ENCODE measurements at regions of chr2 and their contacts with region 1.

Region 1: DNA sequence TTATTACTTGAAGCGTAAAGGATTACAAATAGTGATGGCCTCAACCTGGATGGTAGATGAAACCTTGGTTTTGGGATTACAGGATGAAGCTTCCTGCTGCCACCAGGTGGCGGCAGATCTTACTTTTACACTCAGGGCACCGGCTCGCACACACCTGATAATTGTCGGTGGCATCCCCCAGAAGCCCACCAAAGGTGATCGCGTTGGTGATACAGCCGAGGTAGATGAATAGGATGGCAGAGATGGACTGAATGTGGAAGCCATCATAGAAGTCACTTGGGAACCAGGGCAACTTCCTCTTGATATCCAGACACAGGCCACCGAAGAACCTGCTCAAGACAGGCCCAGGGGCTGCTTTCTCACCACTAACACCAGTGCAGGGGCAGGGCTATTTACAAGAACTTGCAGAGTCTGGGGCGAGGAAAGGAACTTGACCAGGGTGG is 51.8 kb downstream of the MTHFD2 start:
- DNase-seq: peak; percentile 25 to 36
- ATAC-seq: peak in 1 of 8 donors; percentile 31
- H3K4me3 ChIP-seq: no peak overlapping the region
- H3K27ac ChIP-seq: no peak overlapping the region
- H3K4me1 ChIP-seq: peaks cover 0 to 11% (median 0%) of the 10 kb centered on the region in 9 donors
- H3K27me3 ChIP-seq: no peaks in the 10 kb centered on the region
- CTCF ChIP-seq: peak; percentile 56 to 84 (median 75)

Region 2: GRCh38 chr2:74147727-74148456 is 102.3 kb before region 1 on chr2 and contains the start of gene BOLA3:
- intact Hi-C with region 1: no loop called
- DNase-seq: peak; percentile 85 to 90
- ATAC-seq: peak; percentile 96 to 99 (median 98)
- H3K4me3 ChIP-seq: peak within 1 kb of the TSS; percentile 66 to 97 (median 86)
- H3K27ac ChIP-seq: peak within 1 kb of the TSS; percentile 14 to 83 (median 77)
- H3K4me1 ChIP-seq: peaks cover 10 to 30% (median 23%) of the 10 kb centered on the region in 9 donors
- H3K27me3 ChIP-seq: no peaks in the 10 kb centered on the region
- CTCF ChIP-seq: peak; percentile 56 to 93 (median 88)
- total RNA-seq, gene BOLA3: 63.9 to 117 (median 82.3) TPM

Region 3: GRCh38 chr2:74334931-74335333 is 84.7 kb after region 1 on chr2:
- intact Hi-C with region 1: loop called in 5 of 10 experiments (anchors 2 to 5 kb)
- DNase-seq: peak; percentile 74 to 76
- ATAC-seq: peak; percentile 74 to 86 (median 82)
- H3K4me3 ChIP-seq: no peak overlapping the region
- H3K27ac ChIP-seq: no peak overlapping the region
- H3K4me1 ChIP-seq: peaks cover 0 to 6% (median 0%) of the 10 kb centered on the region in 9 donors
- H3K27me3 ChIP-seq: no peaks in the 10 kb centered on the region
- CTCF ChIP-seq: peak; percentile 85 to 99 (median 95)

Region 4: GRCh38 chr2:74399785-74400184 is 149.6 kb after region 1 on chr2:
- intact Hi-C with region 1: loop called in 2 of 10 experiments (anchors 5 kb)
- DNase-seq: no peak
- ATAC-seq: peak in 3 of 8 donors; percentile 26 to 34 (median 27)
- H3K4me3 ChIP-seq: no peak overlapping the region
- H3K27ac ChIP-seq: no peak overlapping the region
- H3K4me1 ChIP-seq: no peaks in the 10 kb centered on the region
- H3K27me3 ChIP-seq: no peaks in the 10 kb centered on the region
- CTCF ChIP-seq: peak in 8 of 9 donors; percentile 32 to 60 (median 46)

Measured in heart right ventricle (tissue), 16 donors.